ENCODE measurements at regions of chr1 and their contacts with region 1.

Region 1: DNA sequence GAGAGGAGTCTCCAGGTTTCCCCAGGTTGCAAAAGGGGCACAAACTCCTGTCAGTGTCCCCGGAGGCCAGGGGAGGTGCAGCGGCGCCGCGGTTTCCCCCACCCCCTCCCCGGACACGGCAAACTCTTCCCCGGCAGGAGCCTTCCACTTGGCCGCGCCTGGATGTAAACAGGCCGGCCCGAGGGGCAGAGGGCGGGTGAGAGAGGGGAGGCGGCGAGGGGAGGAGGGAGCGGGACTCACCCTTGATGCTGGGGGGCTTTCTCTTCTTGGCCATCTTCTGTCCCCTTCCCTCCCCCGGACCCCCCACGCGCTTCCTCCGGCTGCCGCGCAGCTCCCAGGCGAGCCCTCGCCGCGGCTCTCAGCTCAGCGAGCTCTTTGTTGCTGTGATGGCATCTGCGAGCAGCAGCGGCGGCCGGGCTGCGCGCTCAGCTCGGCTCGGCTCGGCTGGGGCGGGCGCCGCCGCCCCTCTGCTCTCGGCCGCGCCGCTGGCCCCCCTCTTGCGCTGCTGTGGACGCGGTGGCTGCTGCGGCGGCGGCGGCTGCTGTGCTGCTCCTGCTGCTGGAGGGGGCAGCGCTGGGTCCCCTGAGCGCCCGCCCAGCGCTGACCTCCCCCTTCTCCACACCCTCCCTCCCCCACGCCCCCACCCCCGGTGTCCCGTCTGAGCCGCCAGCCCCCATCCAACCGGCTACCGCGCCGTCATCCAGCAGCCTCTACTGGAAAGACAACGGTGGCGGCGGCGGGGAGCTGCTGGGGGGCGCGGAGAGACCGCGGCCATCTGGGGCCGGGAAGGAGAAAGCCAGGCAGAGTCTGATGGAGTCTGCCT is 4.9 kb upstream of the SLC44A5 start:
- H3K4me3 ChIP-seq: peak overlapping the region; percentile 90
- H3K27ac ChIP-seq: peak overlapping the region; percentile 59
- H3K4me1 ChIP-seq: peaks cover 13% of the 10 kb centered on the region
- CTCF ChIP-seq: no peak

Region 2: DNA sequence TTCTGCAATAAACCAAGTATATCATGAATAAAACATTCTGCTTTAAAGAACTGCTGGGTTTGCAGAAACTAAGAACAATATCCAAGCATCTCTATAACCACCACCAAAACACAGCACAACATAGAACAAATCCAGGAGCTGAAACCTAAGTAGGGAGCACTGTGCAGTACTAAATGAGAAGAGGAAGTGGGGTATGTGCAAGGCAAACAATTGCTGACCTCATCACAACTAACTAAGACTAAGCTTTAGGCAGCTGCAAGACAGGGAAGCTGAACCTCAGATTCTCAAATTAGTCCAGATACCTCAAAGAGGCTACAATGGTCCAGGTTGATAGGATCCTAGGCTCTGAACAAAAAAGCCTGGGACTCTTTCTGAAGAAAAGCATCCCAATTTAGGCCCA is 177.5 kb before region 1 on chr1:
- CTCF ChIA-PET with region 1: no interaction called
- POLR2A ChIA-PET with region 1: no interaction called
- H3K4me3 ChIP-seq: no peak overlapping the region
- H3K27ac ChIP-seq: no peak overlapping the region
- H3K4me1 ChIP-seq: no peaks in the 10 kb centered on the region
- CTCF ChIP-seq: no peak

Region 3: GRCh38 chr1:75602486-75602885 is 13.3 kb before region 1 on chr1:
- CTCF ChIA-PET with region 1: interaction called, 11 read pairs
- POLR2A ChIA-PET with region 1: no interaction called
- H3K4me3 ChIP-seq: no peak overlapping the region
- H3K27ac ChIP-seq: no peak overlapping the region
- H3K4me1 ChIP-seq: no peaks in the 10 kb centered on the region
- CTCF ChIP-seq: no peak